ENCODE measurements at regions of chr2 and their contacts with region 1.

Region 1: GRCh38 chr2:96414161-96414710 is 78.7 kb downstream of the NCAPH start:
- DNase-seq: no peak
- H3K4me3 ChIP-seq: no peak overlapping the region
- H3K27ac ChIP-seq: no peak overlapping the region
- H3K4me1 ChIP-seq: peaks cover 7% of the 10 kb centered on the region
- H3K27me3 ChIP-seq: no peaks in the 10 kb centered on the region
- CTCF ChIP-seq: no peak

Region 2: GRCh38 chr2:96164459-96165184 is 249.6 kb before region 1 on chr2:
- CTCF ChIA-PET with region 1: no interaction called
- dilution Hi-C with region 1: no loop called
- in situ Hi-C with region 1: no loop called
- intact Hi-C with region 1: no loop called
- DNase-seq: no peak
- H3K4me3 ChIP-seq: no peak overlapping the region
- H3K27ac ChIP-seq: no peak overlapping the region
- H3K4me1 ChIP-seq: no peaks in the 10 kb centered on the region
- H3K27me3 ChIP-seq: no peaks in the 10 kb centered on the region
- CTCF ChIP-seq: no peak

Region 3: DNA sequence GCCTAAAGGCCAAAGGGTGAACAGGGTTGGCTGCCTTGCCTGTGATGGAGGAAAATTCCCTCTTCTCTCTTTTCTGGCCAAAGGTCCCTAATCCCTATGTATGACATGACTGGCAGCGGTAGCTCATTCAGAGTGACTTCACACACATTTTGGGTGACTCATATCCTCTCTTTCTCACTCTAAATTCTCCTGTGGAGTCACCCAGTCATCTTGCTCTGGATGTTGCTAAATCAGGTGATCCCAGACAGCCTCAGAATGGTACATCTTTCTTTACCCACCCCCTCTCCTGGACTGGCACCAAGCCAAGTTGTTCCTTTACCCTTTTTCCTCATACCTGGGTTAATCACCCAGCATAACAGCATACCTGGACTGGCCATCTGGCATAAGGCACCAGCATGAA is 13.7 kb after region 1 on chr2:
- CTCF ChIA-PET with region 1: interaction called, 10 read pairs
- dilution Hi-C with region 1: no loop called
- in situ Hi-C with region 1: no loop called
- intact Hi-C with region 1: no loop called
- DNase-seq: peak; percentile 96
- H3K4me3 ChIP-seq: no peak overlapping the region
- H3K27ac ChIP-seq: no peak overlapping the region
- H3K4me1 ChIP-seq: peaks cover 20% of the 10 kb centered on the region
- H3K27me3 ChIP-seq: no peaks in the 10 kb centered on the region
- CTCF ChIP-seq: no peak